Astrocyte of the cerebellum (primary cell): ENCODE measurements at regions of chr12 and their contacts with region 1.

Region 1: DNA sequence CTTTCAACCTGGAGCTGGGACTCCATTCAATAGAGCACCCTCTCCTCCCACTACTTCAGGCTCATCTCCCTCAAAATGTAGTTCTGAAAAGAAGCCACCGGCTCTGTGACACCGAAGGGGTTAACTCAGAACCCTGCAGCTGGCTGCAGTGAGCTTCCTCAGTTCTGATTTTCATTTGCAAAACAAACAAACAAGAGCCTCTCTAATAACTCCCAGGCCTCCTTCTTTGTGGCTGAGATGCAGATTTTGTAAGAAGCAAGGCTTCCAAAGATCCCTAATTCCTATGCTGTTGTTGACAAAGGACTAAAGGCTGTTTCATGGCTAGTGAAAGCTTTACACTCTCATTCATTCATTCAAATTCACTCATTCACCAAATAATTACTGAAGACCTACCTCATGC is 333.4 kb upstream of the TBX3 start:
- DNase-seq: no peak
- H3K4me3 ChIP-seq: no peak overlapping the region
- CTCF ChIP-seq: no peak

Region 2: DNA sequence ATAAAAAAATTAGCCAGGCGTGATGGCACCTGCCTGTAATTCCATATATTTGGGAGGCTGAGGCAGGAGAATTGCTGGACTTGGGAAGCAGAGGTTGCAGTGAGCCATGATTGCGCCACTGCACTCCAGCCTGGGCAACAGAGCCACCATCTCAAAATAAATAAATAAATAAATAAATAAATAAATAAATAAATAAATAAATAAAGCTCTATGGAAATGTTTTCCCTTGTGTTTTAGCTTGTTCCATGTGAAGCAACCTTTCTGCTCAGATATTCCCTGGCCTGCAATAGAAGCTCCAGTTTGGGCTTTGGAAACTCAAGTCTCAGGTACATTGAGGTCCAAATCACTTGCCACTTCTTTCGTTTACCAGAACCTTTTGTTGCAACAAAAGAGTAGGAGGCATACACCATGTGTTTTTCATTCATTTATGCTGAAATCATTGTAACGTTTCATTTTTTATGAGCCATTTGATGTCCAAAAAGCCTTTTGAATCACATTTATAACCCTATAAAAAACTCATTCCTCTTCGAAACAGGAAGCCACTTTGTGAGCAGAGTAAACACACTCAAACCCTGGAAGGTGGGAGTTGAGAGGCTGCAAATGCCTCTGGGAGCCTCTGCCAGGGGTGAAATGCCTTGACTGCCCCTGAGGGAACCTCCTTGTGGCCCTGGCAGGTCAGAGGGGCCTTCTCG is 43.3 kb after region 1 on chr12:
- in situ Hi-C with region 1: loop called (anchors 5 kb)
- DNase-seq: no peak
- H3K4me3 ChIP-seq: no peak overlapping the region
- CTCF ChIP-seq: no peak